PC-9 (cell line): ENCODE measurements at regions of chr11 and their contacts with region 1.

Region 1: DNA sequence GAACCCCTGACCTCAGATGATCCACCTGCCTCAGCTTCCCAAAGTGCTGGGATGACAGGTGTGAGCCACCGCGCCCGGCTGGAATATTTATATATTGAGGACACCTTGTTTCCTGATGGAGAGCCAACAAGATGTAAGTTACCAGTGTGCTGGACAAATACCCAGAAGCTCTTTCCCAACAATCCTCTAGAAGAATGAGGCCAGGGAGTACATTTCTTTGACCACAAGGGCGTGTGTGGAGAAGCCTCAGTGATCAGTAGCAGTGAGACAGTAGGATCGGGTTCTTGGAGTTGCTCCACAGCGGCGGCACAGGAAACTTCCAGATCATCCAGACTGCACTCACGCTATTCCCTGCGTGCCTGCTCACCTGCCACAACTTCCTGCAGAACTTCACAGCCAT is 10.3 kb upstream of the POLA2 start:
- DNase-seq: peak in 1 of 2 experiments; percentile 50
- H3K4me3 ChIP-seq: no peak overlapping the region
- H3K27ac ChIP-seq: no peak overlapping the region
- H3K4me1 ChIP-seq: no peaks in the 10 kb centered on the region
- H3K27me3 ChIP-seq: no peaks in the 10 kb centered on the region
- CTCF ChIP-seq: no peak; the same call in 1 of the 2 replicates

Region 2: DNA sequence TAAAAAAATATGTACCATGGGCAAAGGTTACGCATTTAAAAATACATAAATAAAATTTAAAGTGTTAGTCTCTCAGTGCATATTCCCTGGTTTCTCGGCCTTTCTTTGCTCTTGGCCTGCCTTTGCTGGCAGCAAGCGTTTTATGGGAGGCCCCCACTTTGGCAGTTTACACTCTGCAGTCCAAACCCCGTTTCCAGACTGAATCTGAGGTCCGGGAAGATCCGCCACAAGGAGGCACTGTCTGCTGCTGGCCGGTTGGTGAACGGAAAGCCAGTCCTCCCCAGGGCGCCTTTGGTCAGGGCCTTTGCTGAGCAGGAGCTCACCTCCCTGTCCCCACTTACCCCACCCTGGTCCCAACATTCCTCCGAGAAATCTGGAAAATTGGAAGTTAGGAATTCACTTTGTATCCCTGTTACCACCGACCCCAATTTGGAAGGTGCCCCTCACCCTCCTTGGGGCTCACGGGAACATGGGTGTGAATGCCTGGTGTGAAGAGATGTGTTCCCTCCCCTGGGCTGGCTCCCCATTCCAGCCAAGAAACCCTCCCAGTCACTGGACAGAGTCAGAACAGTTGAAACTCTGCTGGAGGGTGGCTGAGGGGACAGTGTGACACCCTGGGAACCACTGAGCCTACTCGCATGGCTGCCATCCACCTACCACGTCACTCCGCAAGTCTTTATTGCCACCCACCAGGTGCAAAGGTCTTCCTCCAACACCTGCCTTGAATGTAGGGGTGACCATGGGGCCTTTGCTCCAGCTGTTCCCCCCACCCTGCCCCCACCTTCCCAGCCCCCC is 463.8 kb before region 1 on chr11:
- CTCF ChIA-PET with region 1: no interaction called
- POLR2A ChIA-PET with region 1: no interaction called
- intact Hi-C with region 1: loop called (anchors 10 kb)
- DNase-seq: peak; percentile 43 to 62
- H3K4me3 ChIP-seq: no peak overlapping the region
- H3K27ac ChIP-seq: no peak overlapping the region
- H3K4me1 ChIP-seq: no peaks in the 10 kb centered on the region
- H3K27me3 ChIP-seq: no peaks in the 10 kb centered on the region
- CTCF ChIP-seq: peak; percentile 81

Region 3: DNA sequence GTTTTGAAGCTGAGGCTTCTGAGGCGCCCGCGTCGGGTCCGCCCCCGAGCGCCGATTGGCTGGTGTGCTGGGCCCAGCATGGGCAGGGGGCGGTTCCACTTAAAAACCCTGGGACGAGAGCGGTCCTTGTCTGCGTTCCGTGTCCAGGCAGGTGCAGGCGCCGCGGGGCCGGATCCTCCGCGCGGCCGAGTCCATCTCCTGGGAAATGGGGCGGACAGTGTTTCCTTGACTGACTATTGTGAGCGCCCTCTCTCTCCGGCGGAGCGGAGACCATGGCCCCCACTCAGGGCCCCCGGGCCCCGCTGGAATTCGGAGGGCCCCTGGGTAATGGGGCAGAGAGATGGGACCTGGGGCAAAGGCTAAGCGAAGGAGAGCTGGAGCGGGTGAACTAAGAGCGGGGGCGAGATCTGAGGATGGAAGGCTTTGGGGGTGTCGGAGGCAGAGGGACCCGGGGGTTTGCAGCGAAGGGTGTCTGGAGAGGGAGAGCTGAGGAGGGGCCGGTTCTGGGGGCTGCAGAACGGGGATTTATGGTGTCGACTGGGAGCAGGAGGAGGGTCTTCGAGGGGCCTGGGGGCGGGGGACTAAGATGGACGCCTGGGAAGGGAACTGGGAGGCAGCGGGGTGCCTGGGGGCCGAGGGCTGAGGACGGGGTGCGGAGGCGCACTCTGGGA is 139.6 kb before region 1 on chr11 and contains the start of gene TM7SF2:
- CTCF ChIA-PET with region 1: interaction called, 5 read pairs
- POLR2A ChIA-PET with region 1: no interaction called
- intact Hi-C with region 1: loop called (anchors 1 kb)
- DNase-seq: peak; percentile 92 to 97
- H3K4me3 ChIP-seq: peak within 1 kb of the TSS; percentile 78
- H3K27ac ChIP-seq: no peak within 1 kb of the TSS
- H3K4me1 ChIP-seq: peaks cover 40% of the 10 kb centered on the region
- H3K27me3 ChIP-seq: no peaks in the 10 kb centered on the region
- CTCF ChIP-seq: no peak
- total RNA-seq, gene TM7SF2: 49.5 and 72.3 TPM in 2 replicates

Region 4: GRCh38 chr11:65204646-65205601 is 46.6 kb before region 1 on chr11:
- CTCF ChIA-PET with region 1: interaction called, 4 read pairs
- POLR2A ChIA-PET with region 1: interaction called, 6 read pairs
- intact Hi-C with region 1: loop called (anchors 1 kb)
- DNase-seq: peak in 1 of 2 experiments; percentile 57
- H3K4me3 ChIP-seq: no peak overlapping the region
- H3K27ac ChIP-seq: peak overlapping the region; percentile 72
- H3K4me1 ChIP-seq: peaks cover 70% of the 10 kb centered on the region
- H3K27me3 ChIP-seq: no peaks in the 10 kb centered on the region
- CTCF ChIP-seq: peak; percentile 99

Region 5: DNA sequence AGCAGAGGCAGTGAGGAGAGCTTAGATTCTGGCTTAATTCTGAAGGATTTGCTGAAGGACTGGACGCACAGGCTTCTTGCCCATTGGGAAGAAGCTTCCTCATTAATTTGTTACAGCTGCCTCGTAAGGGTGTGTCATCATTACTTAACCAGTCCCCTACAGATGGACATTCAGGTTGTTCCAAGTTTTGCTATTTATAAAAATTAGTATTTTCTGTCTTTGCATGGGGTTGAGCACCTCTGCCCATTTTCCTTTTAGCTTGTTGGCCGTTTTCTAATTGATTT is 31.6 kb before region 1 on chr11:
- CTCF ChIA-PET with region 1: no interaction called
- POLR2A ChIA-PET with region 1: no interaction called
- intact Hi-C with region 1: no loop called
- DNase-seq: no peak
- H3K4me3 ChIP-seq: no peak overlapping the region
- H3K27ac ChIP-seq: no peak overlapping the region; the same call in 1 of the 2 replicates
- H3K4me1 ChIP-seq: peaks cover 24% of the 10 kb centered on the region
- H3K27me3 ChIP-seq: no peaks in the 10 kb centered on the region
- CTCF ChIP-seq: no peak